AG04449 (cell line): ENCODE measurements at regions of chr15 and their contacts with region 1.

Region 1: GRCh38 chr15:45714590-45715488 is 80.0 kb downstream of the SQOR start:
- DNase-seq: no peak
- H3K4me3 ChIP-seq: no peak overlapping the region
- CTCF ChIP-seq: peak; percentile 85

Region 2: GRCh38 chr15:45790325-45790943 is 75.6 kb after region 1 on chr15:
- CTCF ChIA-PET with region 1: interaction called, 23 read pairs
- POLR2A ChIA-PET with region 1: no interaction called
- DNase-seq: no peak
- H3K4me3 ChIP-seq: no peak overlapping the region
- CTCF ChIP-seq: peak; percentile 40